ENCODE measurements at regions of chr5 and their contacts with region 1.

Region 1: DNA sequence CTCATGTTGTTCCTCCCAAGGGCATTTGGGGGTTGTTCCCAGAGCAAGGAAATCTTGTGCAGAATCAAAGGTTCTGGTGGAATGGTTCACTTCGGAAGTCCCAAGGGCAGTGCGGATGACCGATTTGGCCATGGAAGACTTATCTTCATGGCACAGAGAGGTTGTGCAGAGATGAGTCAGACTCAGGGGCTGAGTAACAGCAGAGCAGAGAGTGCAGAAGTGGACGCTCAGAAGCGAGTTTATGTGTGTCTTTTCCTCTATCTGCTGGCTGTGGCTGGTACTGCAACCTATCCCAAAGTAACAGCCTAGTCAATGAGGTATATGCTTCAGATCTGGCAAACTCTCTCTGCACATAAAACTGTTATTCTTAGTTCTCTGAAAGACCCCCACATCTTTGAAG is 118.1 kb downstream of the DPYSL3 start:
- DNase-seq: no peak
- H3K4me3 ChIP-seq: no peak overlapping the region
- H3K27ac ChIP-seq: peak overlapping the region; percentile 42 to 69 (median 59)
- H3K4me1 ChIP-seq: peaks cover 0 to 71% (median 39%) of the 10 kb centered on the region in 4 donors
- H3K27me3 ChIP-seq: no peaks in the 10 kb centered on the region
- CTCF ChIP-seq: peak; percentile 47 to 67 (median 60)
- EP300 ChIP-seq: no peak
- POLR2A ChIP-seq: no peak

Region 2: GRCh38 chr5:147349241-147349640 is 42.5 kb before region 1 on chr5:
- intact Hi-C with region 1: no loop called
- DNase-seq: no peak
- H3K4me3 ChIP-seq: no peak overlapping the region
- H3K27ac ChIP-seq: no peak overlapping the region
- H3K4me1 ChIP-seq: no peaks in the 10 kb centered on the region
- H3K27me3 ChIP-seq: peaks cover 0 to 6% (median 0%) of the 10 kb centered on the region in 4 donors
- CTCF ChIP-seq: no peak
- EP300 ChIP-seq: no peak
- POLR2A ChIP-seq: no peak

Region 3: DNA sequence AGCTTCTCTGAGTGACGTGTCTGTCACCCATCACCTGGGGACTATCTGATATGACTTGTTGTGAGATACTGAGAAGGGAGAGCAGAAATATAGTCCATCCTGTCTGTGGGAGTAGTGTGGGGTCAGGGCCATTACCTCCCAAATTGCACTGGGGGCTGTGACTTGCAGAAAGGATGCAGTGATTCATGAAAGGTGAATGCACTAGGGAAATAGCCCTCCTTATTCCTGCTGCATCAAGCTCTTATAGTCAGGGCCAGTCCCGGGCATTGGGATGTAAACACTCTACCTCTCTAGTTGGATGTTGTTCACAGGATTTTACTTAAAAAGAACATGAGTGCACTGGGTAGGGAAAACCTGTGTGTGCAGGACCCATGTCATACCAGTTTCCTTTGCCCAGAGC is 32.2 kb before region 1 on chr5:
- intact Hi-C with region 1: no loop called
- DNase-seq: no peak
- H3K4me3 ChIP-seq: no peak overlapping the region
- H3K27ac ChIP-seq: no peak overlapping the region
- H3K4me1 ChIP-seq: no peaks in the 10 kb centered on the region
- H3K27me3 ChIP-seq: no peaks in the 10 kb centered on the region
- CTCF ChIP-seq: no peak
- EP300 ChIP-seq: no peak
- POLR2A ChIP-seq: no peak

Region 4: GRCh38 chr5:147558826-147559225 is 167.0 kb after region 1 on chr5:
- intact Hi-C with region 1: loop called (anchors 5 kb)
- DNase-seq: no peak
- H3K4me3 ChIP-seq: no peak overlapping the region
- H3K27ac ChIP-seq: peak overlapping the region; percentile 62 to 87 (median 65)
- H3K4me1 ChIP-seq: peaks cover 12 to 41% (median 37%) of the 10 kb centered on the region in 4 donors
- H3K27me3 ChIP-seq: no peaks in the 10 kb centered on the region
- CTCF ChIP-seq: peak; percentile 79 to 82 (median 82)
- EP300 ChIP-seq: no peak
- POLR2A ChIP-seq: no peak